ENCODE measurements at regions of chr14 and their contacts with region 1.

Region 1: GRCh38 chr14:34875031-34875922 is at the start of gene BAZ1A:
- DNase-seq: peak; percentile 80
- H3K4me3 ChIP-seq: peak within 1 kb of the TSS; percentile 85 to 90
- H3K27ac ChIP-seq: peak within 1 kb of the TSS; percentile 96 to 98
- H3K4me1 ChIP-seq: peaks cover 3% of the 10 kb centered on the region
- H3K27me3 ChIP-seq: no peaks in the 10 kb centered on the region
- CTCF ChIP-seq: peak in 1 of 3 experiments; percentile 22
- POLR2A ChIP-seq: peak; percentile 26
- total RNA-seq, gene BAZ1A: 63.1 to 78.2 TPM

Region 2: GRCh38 chr14:34714320-34715126 is 160.8 kb before region 1 on chr14 and contains the start of gene CFL2:
- intact Hi-C with region 1: no loop called
- DNase-seq: peak; percentile 90
- H3K4me3 ChIP-seq: peak within 1 kb of the TSS; percentile 96 to 97
- H3K27ac ChIP-seq: peak within 1 kb of the TSS; percentile 98
- H3K4me1 ChIP-seq: peaks cover 30% of the 10 kb centered on the region
- H3K27me3 ChIP-seq: no peaks in the 10 kb centered on the region
- CTCF ChIP-seq: no peak
- POLR2A ChIP-seq: peak; percentile 5
- total RNA-seq, gene CFL2: 66.8 to 67.7 TPM

Region 3: DNA sequence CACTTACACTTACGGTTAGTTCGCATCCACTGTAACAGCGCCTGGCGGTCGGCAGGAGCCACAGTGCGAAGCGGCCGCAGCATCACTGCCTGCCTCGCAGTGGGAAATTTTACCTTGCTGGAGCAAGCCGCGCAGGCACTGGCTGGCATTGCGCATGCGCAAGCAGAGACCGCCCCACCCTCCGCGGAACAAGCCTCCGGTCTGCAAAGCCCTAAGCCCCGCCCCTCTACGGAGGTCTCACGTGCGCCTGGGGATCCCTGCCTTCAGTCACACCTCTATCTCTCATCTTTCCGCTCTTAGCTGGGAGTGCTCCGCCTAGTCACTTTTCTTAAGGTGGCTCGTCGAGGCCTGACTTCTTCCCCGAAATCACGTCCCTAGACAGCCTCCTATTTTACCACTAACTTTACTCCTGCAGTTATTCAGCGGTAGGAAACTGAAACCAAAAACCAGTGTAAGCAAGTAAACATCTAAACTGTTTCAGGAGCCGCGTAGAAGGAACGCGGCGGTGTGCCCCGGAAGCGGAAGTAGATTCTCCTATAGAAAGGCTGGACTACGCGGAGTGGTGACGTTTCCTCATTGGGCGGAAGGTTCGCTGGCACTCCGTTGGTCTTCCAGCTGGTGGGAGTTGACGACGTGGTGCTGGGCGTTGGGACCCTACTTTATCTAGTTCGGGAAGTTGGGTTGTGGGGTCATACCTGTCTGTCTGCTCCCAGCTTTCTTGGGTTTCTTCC is 107.3 kb after region 1 on chr14 and contains the start of gene SRP54:
- intact Hi-C with region 1: loop called (anchors 5 kb)
- DNase-seq: peak; percentile 99
- H3K4me3 ChIP-seq: peak within 1 kb of the TSS; percentile 79 to 92
- H3K27ac ChIP-seq: peak within 1 kb of the TSS; percentile 96 to 99
- H3K4me1 ChIP-seq: peaks cover 24% of the 10 kb centered on the region
- H3K27me3 ChIP-seq: no peaks in the 10 kb centered on the region
- CTCF ChIP-seq: peak in 2 of 3 experiments; percentile 32 to 54
- POLR2A ChIP-seq: peak; percentile 83
- total RNA-seq, gene SRP54: 84.1 to 132 TPM

Region 4: GRCh38 chr14:35046048-35046741 is 170.9 kb after region 1 on chr14 and contains the start of gene FAM177A1:
- intact Hi-C with region 1: loop called (anchors 10 kb)
- DNase-seq: peak; percentile 98
- H3K4me3 ChIP-seq: peak within 1 kb of the TSS; percentile 90 to 92
- H3K27ac ChIP-seq: peak within 1 kb of the TSS; percentile 96
- H3K4me1 ChIP-seq: peaks cover 10% of the 10 kb centered on the region
- H3K27me3 ChIP-seq: no peaks in the 10 kb centered on the region
- CTCF ChIP-seq: no peak
- POLR2A ChIP-seq: peak; percentile 73
- total RNA-seq, gene FAM177A1: 49.6 to 52.5 TPM

Measured in testis (tissue), 5 donors.